ENCODE measurements at regions of chr18 and their contacts with region 1.

Region 1: GRCh38 chr18:623761-624620 is 27.2 kb downstream of the CLUL1 start:
- DNase-seq: peak; percentile 69
- H3K4me3 Mint-ChIP-seq: no peak overlapping the region
- H3K27ac Mint-ChIP-seq: no peak overlapping the region
- H3K4me1 Mint-ChIP-seq: no peaks in the 10 kb centered on the region
- H3K27me3 Mint-ChIP-seq: peaks cover 37% of the 10 kb centered on the region

Region 2: GRCh38 chr18:286515-287310 is 337.3 kb before region 1 on chr18:
- CTCF ChIA-PET with region 1: no interaction called
- POLR2A ChIA-PET with region 1: no interaction called
- DNase-seq: no peak
- H3K4me3 Mint-ChIP-seq: no peak overlapping the region
- H3K27ac Mint-ChIP-seq: no peak overlapping the region
- H3K4me1 Mint-ChIP-seq: no peaks in the 10 kb centered on the region
- H3K27me3 Mint-ChIP-seq: peaks cover 21% of the 10 kb centered on the region

Region 3: DNA sequence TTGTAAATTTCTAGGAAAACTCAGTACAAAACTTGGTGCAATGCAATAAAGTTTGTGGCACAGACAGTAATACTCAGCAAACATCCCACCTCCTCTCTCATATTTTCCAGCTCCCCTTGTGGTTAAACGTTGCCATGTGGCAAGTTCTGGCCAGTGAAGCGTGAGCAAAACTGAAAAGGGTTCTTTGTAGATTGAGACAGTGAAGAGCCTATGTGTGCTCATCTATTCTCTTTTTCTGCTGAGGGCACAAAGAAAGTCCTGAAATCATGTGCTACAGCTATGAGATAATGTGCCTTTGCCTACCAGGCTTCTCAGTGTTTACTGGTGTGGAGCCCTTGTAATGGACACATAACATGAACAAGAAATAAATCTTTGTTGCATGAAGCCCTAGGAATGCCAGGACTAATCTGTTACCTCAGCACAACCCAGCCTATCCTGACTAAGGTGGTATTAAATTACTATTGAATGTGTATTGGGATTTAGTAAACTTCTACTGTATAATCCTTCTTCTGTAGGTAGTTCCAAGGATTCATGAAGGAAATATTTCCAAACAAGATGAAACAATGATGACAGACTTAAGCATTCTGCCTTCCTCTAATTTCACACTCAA is 20.5 kb after region 1 on chr18:
- CTCF ChIA-PET with region 1: interaction called, 12 read pairs
- POLR2A ChIA-PET with region 1: no interaction called
- DNase-seq: no peak
- H3K4me3 Mint-ChIP-seq: no peak overlapping the region
- H3K27ac Mint-ChIP-seq: no peak overlapping the region
- H3K4me1 Mint-ChIP-seq: peaks cover 4% of the 10 kb centered on the region
- H3K27me3 Mint-ChIP-seq: peaks cover 23% of the 10 kb centered on the region

Region 4: DNA sequence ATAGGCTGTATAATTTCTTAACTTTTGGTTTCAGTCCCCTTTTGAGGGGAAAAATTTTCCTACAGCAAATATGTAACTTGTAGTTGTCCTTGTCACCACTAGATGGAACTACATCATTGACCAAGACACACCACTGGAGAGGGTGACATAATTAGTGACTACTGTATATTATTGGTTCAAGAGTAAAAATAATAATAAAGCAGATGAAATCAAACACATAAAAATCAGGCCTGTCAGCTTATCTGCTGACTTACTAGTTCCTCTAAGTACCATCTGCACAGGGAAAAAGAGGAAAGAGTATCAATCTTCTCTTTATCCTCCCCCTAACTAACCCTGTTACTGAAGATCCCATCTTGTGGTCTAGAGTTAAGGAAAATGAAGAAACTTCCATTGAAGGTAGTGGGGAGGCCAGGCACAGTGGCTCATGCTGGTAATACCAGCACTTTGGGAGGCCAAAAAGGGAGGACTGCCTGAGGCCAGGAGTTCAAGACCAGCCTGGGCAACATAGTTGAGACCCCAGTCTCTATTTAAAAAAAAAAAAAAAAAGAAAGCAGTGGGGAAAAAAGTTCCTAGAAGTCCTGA is 118.0 kb after region 1 on chr18:
- CTCF ChIA-PET with region 1: interaction called, 14 read pairs
- POLR2A ChIA-PET with region 1: no interaction called
- DNase-seq: no peak
- H3K4me3 Mint-ChIP-seq: no peak overlapping the region
- H3K27ac Mint-ChIP-seq: no peak overlapping the region
- H3K4me1 Mint-ChIP-seq: peaks cover 6% of the 10 kb centered on the region
- H3K27me3 Mint-ChIP-seq: no peaks in the 10 kb centered on the region

Region 5: GRCh38 chr18:955379-956066 is 331.5 kb after region 1 on chr18:
- CTCF ChIA-PET with region 1: no interaction called
- POLR2A ChIA-PET with region 1: no interaction called
- DNase-seq: no peak
- H3K4me3 Mint-ChIP-seq: no peak overlapping the region
- H3K27ac Mint-ChIP-seq: no peak overlapping the region
- H3K4me1 Mint-ChIP-seq: no peaks in the 10 kb centered on the region
- H3K27me3 Mint-ChIP-seq: peaks cover 2% of the 10 kb centered on the region

Measured in activated CD4-positive, alpha-beta memory T cell treated with anti-CD3 and anti-CD28 coated beads, Interleukin-2, amount 10 ng/mL, durations not matched to agents 7 days and 5 days (primary cell).